ENCODE measurements at regions of chr3 and their contacts with region 1.

Region 1: GRCh38 chr3:178325330-178325729 is 210.9 kb upstream of the KCNMB2 start:
- DNase-seq: no peak
- ATAC-seq: no peak
- H3K4me3 ChIP-seq: no peak overlapping the region
- H3K27ac ChIP-seq: peak overlapping the region; percentile 71; the same call in 1 of the 2 replicates
- H3K4me1 ChIP-seq: no peaks in the 10 kb centered on the region; the same call in 1 of the 2 replicates
- H3K27me3 ChIP-seq: no peaks in the 10 kb centered on the region
- CTCF ChIP-seq: peak; percentile 36; the same call in 1 of the 2 replicates

Region 2: DNA sequence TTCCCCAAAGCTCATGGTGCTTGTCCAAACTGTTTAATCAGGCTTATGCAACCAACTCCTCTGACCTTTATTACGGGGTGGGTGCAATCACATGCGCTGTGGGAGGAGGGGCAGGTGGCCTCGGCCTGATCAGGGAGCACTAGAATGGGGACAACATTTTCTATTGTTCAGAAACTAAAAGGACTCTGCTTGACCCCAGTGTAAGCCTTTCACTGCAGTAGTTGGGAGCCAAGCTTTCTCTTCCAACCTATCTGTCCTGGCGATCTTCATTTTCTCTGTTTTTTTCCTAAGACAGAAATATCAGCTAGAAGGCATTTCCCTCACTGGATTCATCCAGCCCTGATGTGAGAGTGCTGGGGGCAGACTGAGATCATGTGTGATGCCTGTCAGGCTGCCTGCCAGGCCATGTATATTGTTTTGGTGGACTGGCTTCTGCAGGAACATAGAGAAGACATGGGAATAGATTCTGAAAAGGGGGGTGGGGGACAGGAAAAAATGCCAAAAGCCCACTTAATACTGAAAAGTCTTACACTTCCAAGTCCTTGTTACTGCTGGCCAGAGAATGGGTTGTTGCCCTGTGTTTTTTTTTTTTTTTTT is 501.0 kb before region 1 on chr3:
- CTCF ChIA-PET with region 1: no interaction called
- POLR2A ChIA-PET with region 1: no interaction called
- in situ Hi-C with region 1: no loop called
- intact Hi-C with region 1: loop called (anchors 10 kb)
- DNase-seq: no peak
- ATAC-seq: peak; percentile 89
- H3K4me3 ChIP-seq: peak overlapping the region in 1 of 2 experiments; percentile 2; a peak in 1 of 4 replicates
- H3K27ac ChIP-seq: peak overlapping the region; percentile 80
- H3K4me1 ChIP-seq: peaks cover 50% of the 10 kb centered on the region
- H3K27me3 ChIP-seq: no peaks in the 10 kb centered on the region
- CTCF ChIP-seq: no peak

Region 3: GRCh38 chr3:178419071-178419470 is 93.7 kb after region 1 on chr3:
- CTCF ChIA-PET with region 1: no interaction called
- POLR2A ChIA-PET with region 1: no interaction called
- in situ Hi-C with region 1: no loop called
- intact Hi-C with region 1: no loop called
- DNase-seq: no peak
- ATAC-seq: no peak
- H3K4me3 ChIP-seq: no peak overlapping the region
- H3K27ac ChIP-seq: no peak overlapping the region
- H3K4me1 ChIP-seq: no peaks in the 10 kb centered on the region
- H3K27me3 ChIP-seq: no peaks in the 10 kb centered on the region
- CTCF ChIP-seq: no peak